Activated CD4-positive, alpha-beta T cell treated with anti-CD3 and anti-CD28 coated beads, Interleukin-2, amount 10 ng/mL, durations not matched to agents 24 days and 14 days (primary cell): ENCODE measurements at regions of chr2 and their contacts with region 1.

Region 1: DNA sequence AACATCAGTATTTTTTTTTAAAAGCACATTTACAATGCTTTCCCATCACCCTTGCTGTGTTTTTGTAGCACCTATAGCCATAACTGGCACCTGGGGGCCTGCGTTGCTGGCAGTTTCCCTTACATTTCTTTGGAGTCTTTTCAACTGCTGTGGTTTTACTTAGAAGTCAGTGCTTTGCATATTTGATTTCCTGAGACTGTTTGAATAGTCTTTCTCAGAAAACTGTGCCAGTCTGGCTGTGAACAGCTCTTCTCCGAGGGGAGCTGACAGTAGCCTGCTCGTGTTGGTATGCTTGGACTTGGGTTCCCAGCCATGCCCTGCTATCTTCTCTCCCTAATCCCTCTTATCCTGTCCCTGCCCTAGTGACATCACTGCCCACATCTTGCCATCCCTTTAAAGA is 81.5 kb downstream of the DPP4 start:
- DNase-seq: peak; percentile 90
- H3K4me3 Mint-ChIP-seq: peak overlapping the region; percentile 85
- H3K27ac Mint-ChIP-seq: peak overlapping the region; percentile 98
- H3K4me1 Mint-ChIP-seq: peaks cover 62% of the 10 kb centered on the region
- H3K27me3 Mint-ChIP-seq: no peaks in the 10 kb centered on the region

Region 2: DNA sequence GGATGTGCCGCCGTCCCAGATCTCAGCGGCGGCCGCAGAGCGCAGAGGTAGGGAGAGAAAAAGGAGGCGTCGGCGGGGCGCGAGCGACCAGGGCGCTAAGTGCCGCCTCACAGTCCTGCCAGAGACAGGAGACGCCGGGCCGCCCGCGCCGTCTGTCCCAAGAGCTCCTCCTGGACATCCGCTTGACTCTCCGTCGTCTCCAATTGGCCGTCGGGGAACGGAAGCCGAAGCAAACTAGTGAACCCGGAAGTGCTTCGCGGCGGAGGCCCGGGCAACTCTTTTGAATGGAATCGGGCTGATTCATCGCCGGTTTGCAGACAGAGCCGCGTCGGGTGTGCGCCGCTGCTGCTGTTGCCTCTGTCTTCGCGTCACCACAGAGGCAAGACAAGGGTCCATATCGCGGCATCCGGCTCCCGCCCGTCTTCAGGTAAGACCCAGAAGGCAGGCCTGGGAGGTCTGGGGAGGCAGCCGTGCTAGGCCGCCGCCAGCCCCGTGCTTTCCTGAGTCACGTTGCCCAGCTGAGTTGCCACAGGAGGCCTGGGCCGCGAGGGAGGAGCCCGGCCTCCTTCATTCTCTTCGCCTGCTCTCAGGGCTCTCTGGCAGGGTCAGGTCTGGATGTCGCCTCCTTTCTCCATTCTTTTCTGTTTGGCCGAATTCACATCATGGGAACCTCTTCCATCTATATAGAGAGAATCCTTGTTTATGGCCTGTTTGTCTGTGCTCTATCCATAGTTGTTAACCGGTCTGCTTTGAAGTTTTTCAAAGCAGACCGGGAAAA is 684.2 kb before region 1 on chr2 and contains the start of gene PSMD14:
- intact Hi-C with region 1: loop called (anchors 5 kb)
- DNase-seq: peak; percentile 97
- H3K4me3 Mint-ChIP-seq: peak within 1 kb of the TSS; percentile 99
- H3K27ac Mint-ChIP-seq: peak within 1 kb of the TSS; percentile 97
- H3K4me1 Mint-ChIP-seq: peaks cover 33% of the 10 kb centered on the region
- H3K27me3 Mint-ChIP-seq: peaks cover 11% of the 10 kb centered on the region
- total RNA-seq, gene PSMD14: 111 and 113 TPM in 2 replicates

Region 3: DNA sequence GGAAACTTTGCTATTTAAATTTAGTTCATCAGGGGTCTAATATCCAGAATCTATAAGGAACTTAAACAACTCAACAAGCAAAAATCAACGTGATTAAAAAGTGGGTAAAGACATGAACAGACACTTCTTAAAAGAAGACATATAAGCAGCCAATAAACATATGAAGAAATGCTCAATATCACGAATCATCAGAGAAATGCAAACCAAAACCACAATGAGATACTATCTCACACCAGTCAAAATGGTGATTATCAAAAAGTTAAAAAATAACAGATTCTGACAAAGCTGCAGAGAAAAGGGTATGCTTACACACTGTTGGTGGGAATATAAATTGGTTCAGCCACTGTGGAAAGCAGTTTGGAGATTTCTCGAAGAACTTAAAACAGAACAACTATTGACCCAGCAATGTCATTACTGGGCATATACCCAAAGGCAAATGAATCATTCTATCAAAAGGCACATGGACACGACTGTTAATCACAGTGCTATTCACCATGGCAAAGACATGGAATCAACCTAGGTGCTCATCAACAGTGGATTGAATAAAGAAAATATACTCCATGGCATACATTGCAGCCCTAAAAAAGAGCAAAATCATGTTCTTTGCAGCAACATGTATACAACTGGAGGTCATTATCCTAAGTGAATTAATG is 178.4 kb before region 1 on chr2:
- intact Hi-C with region 1: no loop called
- DNase-seq: no peak
- H3K4me3 Mint-ChIP-seq: no peak overlapping the region
- H3K27ac Mint-ChIP-seq: no peak overlapping the region
- H3K4me1 Mint-ChIP-seq: no peaks in the 10 kb centered on the region
- H3K27me3 Mint-ChIP-seq: peaks cover 7% of the 10 kb centered on the region

Region 4: GRCh38 chr2:161981679-161982250 is 10.8 kb before region 1 on chr2:
- intact Hi-C with region 1: loop called (anchors 1 kb)
- DNase-seq: no peak
- H3K4me3 Mint-ChIP-seq: no peak overlapping the region
- H3K27ac Mint-ChIP-seq: peak overlapping the region; percentile 78
- H3K4me1 Mint-ChIP-seq: peaks cover 46% of the 10 kb centered on the region
- H3K27me3 Mint-ChIP-seq: no peaks in the 10 kb centered on the region

Region 5: DNA sequence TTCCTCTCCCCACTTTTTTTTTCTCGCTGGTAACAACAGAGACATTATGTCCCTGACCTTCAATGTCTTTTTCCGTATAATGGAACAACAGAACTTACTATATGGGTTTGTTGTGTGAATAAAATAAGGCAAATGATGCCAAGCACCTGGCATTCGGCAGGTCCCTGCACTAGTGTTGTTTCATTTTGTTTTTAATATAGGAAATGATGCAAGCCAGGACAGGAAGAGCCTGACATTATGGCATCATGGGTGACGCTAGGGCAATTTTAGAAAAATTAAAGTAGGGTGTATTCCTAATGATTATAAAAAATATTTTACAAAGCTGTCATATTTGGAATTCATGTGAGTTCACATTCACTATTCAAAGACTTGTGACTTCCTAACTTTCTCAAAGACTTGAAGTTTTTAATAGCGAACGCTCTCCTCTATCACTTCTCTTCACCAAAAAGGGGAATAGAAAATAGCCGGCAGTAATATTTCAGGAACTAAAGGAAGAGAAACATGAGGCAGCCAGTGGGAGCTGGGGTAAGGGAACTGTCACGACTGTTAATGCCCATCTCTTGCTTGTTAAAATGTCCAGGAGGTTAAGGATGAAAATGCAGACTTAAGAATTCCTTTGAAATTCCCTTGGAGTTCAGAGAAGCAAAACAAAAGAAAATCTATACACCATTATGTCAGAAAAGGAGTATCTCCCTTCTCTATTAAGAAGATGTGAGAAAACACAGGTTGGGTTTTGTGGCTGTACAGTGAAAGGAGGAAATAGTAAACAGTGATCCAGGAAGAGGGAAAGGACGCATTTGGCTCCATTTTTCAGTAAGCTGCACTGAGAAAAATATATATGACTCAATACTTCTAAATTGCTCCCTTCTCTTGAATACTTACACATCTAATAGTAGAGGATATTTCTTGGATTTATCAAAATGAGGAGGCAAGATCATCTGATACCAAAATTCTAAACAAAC is 21.3 kb after region 1 on chr2:
- intact Hi-C with region 1: loop called (anchors 2 kb)
- DNase-seq: peak; percentile 66
- H3K4me3 Mint-ChIP-seq: peak overlapping the region; percentile 78
- H3K27ac Mint-ChIP-seq: peak overlapping the region; percentile 95
- H3K4me1 Mint-ChIP-seq: peaks cover 73% of the 10 kb centered on the region
- H3K27me3 Mint-ChIP-seq: no peaks in the 10 kb centered on the region

Region 6: GRCh38 chr2:162037028-162037795 is 44.7 kb after region 1 on chr2:
- intact Hi-C with region 1: no loop called
- DNase-seq: no peak
- H3K4me3 Mint-ChIP-seq: no peak overlapping the region
- H3K27ac Mint-ChIP-seq: no peak overlapping the region
- H3K4me1 Mint-ChIP-seq: peaks cover 34% of the 10 kb centered on the region
- H3K27me3 Mint-ChIP-seq: no peaks in the 10 kb centered on the region

Region 7: DNA sequence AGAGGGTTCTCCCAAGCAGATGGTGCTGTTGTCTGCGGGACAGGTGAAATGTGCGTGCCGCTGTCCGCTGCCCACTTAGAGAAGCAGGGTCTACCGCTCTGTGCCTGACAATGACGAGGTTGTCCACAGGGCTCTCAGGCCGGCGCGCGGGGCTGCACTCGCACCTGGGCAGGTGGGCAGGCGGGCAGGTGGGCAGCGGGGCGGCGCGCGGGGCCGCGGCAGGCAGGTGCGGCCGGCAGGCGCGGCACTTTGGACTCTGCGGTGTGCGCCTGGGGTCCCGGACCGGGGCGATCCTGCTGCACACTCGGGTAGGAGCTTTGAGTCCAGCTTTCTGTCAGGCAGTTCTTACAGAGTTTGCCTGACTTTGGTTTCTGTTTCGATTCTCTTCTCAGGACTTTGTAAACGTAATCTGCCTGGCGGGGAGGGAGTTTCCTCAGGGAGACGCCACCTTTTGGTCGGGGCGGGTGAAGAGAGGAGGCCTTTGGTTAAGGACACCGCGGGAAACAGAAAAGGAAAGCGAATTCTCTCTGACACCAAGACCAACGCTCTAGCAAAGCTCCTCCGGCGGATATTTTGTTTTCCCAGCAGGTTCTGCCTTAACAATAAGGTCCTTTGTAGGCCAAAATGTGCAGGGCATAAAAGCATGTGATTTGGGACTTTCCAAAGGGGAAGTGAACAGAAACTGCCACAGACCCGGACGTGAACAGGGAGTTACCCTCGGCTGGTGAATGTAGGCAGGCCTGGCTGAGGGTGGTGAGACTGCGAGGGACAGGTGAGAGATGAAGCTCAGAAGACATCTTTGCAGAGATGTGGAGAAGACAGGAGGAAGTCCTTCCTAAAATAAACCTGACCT is 326.0 kb after region 1 on chr2 and contains the start of gene IFIH1:
- intact Hi-C with region 1: loop called (anchors 5 kb)
- DNase-seq: peak; percentile 95
- H3K4me3 Mint-ChIP-seq: peak within 1 kb of the TSS; percentile 87
- H3K27ac Mint-ChIP-seq: peak within 1 kb of the TSS; percentile 93
- H3K4me1 Mint-ChIP-seq: peaks cover 54% of the 10 kb centered on the region
- H3K27me3 Mint-ChIP-seq: no peaks in the 10 kb centered on the region
- total RNA-seq, gene IFIH1: 22.5 and 26.3 TPM in 2 replicates